GM12878 (cell line): ENCODE measurements at regions of chrX and their contacts with region 1.

Region 1: DNA sequence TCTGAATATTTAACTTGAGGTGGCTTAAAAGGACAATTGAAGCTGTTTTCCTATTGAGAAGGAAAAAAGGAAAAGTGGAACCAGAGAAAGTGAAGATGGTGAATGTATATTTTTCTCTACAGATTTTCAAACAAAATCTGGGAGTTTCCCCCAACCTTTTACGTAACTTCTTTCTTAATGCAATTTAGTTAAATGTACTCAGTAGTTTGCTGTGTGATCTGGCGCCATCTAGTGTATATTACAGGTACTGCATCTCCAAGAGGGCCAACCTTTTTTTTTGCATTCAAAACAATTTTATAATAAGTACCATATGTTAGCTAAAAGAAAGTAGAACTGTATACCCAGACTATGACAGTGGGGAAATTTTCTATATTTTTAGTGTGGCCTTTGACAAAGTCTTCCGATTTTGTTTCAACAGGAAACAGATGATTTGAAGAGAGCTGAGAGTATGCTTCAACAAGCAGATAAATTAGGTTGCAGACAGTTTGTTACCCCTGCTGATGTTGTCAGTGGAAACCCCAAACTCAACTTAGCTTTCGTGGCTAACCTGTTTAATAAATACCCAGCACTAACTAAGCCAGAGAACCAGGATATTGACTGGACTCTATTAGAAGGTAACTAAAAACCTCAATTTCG is 82.0 kb downstream of the PLS3 start:
- DNase-seq: peak; percentile 23
- ATAC-seq: peak; percentile 72
- H3K4me3 ChIP-seq: no peak overlapping the region
- H3K27ac ChIP-seq: no peak overlapping the region
- H3K4me1 ChIP-seq: no peaks in the 10 kb centered on the region
- H3K27me3 ChIP-seq: no peaks in the 10 kb centered on the region
- CTCF ChIP-seq: peak; percentile 76 to 86 (median 83)
- EP300 ChIP-seq: no peak
- POLR2A ChIP-seq: no peak
- RAD21 ChIP-seq: peak; percentile 90

Region 2: DNA sequence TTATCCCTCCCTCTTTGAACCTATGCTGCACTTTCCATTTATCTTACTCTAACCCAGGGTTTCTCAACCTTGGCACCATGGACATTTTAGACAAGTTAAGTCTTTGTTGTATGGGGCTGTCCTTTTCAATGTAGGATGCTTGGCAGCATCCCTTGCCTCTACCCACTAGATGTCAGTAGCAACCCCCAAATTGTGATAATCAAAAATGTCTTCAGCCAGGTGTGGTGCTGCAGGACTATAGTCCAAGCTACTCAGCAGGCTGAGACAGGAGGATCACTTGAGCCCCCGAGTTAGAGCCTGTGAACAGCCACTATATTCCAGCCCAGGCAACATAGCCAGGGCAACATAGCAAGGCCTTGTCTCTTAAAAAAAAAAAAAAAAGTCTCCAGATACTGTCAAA is 416.1 kb before region 1 on chrX:
- CTCF ChIA-PET with region 1: interaction called, 5 read pairs
- POLR2A ChIA-PET with region 1: no interaction called
- RAD21 ChIA-PET with region 1: no interaction called
- SMC1A ChIA-PET with region 1: interaction called, 3 read pairs
- in situ Hi-C with region 1: no loop called
- intact Hi-C with region 1: loop called (anchors 2 kb)
- DNase-seq: no peak
- ATAC-seq: peak; percentile 94
- H3K4me3 ChIP-seq: no peak overlapping the region
- H3K27ac ChIP-seq: no peak overlapping the region
- H3K4me1 ChIP-seq: no peaks in the 10 kb centered on the region
- H3K27me3 ChIP-seq: no peaks in the 10 kb centered on the region; a peak in 1 of 4 replicates
- CTCF ChIP-seq: peak; percentile 23 to 61 (median 51); a peak in 3 of 6 replicates
- EP300 ChIP-seq: no peak
- POLR2A ChIP-seq: no peak
- RAD21 ChIP-seq: peak; percentile 61; the same call in 1 of the 2 replicates

Region 3: DNA sequence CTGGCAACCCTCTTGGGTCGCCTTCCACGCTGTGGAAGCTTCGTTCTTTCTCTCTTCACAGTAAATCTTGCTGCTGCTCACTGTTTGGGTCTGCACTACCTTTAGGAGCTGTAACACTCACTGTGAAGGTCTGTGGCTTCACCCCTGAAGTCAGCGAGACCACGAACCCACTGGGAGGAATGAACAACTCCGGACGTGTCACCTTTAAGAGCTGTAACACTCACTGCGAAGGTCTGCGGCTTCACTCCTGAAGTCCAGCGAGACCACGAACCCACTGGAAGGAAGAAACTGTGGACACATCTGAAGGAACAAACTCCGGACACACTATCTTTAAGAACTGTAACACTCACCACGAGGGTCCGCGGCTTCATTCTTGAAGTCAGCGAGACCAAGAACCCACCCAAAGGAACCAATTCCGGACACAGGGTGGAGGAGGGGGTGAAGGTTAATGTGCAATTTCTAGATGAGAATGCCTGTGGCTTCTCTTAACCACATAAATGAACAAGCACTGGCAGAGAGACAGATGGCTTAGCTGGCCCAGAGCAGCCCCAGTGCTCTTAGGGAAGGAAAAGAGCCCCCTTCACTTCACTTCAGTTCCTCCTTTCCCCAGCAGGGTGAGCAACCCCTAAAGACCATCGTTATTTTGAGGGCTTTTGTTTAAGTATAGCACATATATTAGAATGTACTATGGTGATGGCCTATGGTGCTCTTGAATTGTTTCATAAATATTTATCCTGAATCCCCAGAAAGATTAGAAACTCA is 280.5 kb before region 1 on chrX:
- CTCF ChIA-PET with region 1: interaction called, 7 read pairs
- POLR2A ChIA-PET with region 1: no interaction called
- RAD21 ChIA-PET with region 1: interaction called, 3 read pairs
- SMC1A ChIA-PET with region 1: interaction called, 18 read pairs
- in situ Hi-C with region 1: no loop called
- intact Hi-C with region 1: no loop called
- DNase-seq: no peak
- ATAC-seq: peak; percentile 91
- H3K4me3 ChIP-seq: no peak overlapping the region
- H3K27ac ChIP-seq: no peak overlapping the region
- H3K4me1 ChIP-seq: no peaks in the 10 kb centered on the region
- H3K27me3 ChIP-seq: no peaks in the 10 kb centered on the region; a peak in 1 of 4 replicates
- CTCF ChIP-seq: peak in 1 of 3 experiments; percentile 13; a peak in 1 of 6 replicates
- EP300 ChIP-seq: no peak
- POLR2A ChIP-seq: no peak
- RAD21 ChIP-seq: no peak

Region 4: GRCh38 chrX:115592997-115593734 is 49.8 kb before region 1 on chrX:
- CTCF ChIA-PET with region 1: interaction called, 10 read pairs
- POLR2A ChIA-PET with region 1: no interaction called
- RAD21 ChIA-PET with region 1: interaction called, 3 read pairs
- SMC1A ChIA-PET with region 1: interaction called, 5 read pairs
- in situ Hi-C with region 1: no loop called
- intact Hi-C with region 1: no loop called
- DNase-seq: no peak
- ATAC-seq: peak; percentile 22; the same call in 2 of the 3 replicates
- H3K4me3 ChIP-seq: no peak overlapping the region
- H3K27ac ChIP-seq: no peak overlapping the region
- H3K4me1 ChIP-seq: no peaks in the 10 kb centered on the region
- H3K27me3 ChIP-seq: no peaks in the 10 kb centered on the region
- CTCF ChIP-seq: no peak
- EP300 ChIP-seq: no peak
- POLR2A ChIP-seq: no peak
- RAD21 ChIP-seq: no peak

Region 5: GRCh38 chrX:115616943-115617563 is 26.0 kb before region 1 on chrX:
- CTCF ChIA-PET with region 1: interaction called, 11 read pairs
- POLR2A ChIA-PET with region 1: no interaction called
- RAD21 ChIA-PET with region 1: interaction called, 5 read pairs
- SMC1A ChIA-PET with region 1: interaction called, 12 read pairs
- in situ Hi-C with region 1: no loop called
- intact Hi-C with region 1: no loop called
- DNase-seq: peak; percentile 58
- ATAC-seq: peak; percentile 96
- H3K4me3 ChIP-seq: no peak overlapping the region
- H3K27ac ChIP-seq: no peak overlapping the region; the same call in 1 of the 2 replicates
- H3K4me1 ChIP-seq: no peaks in the 10 kb centered on the region; the same call in 1 of the 2 replicates
- H3K27me3 ChIP-seq: no peaks in the 10 kb centered on the region; a peak in 1 of 4 replicates
- CTCF ChIP-seq: no peak
- EP300 ChIP-seq: peak in 1 of 2 experiments; percentile 50; a peak in 1 of 4 replicates
- POLR2A ChIP-seq: no peak
- RAD21 ChIP-seq: no peak

Region 6: DNA sequence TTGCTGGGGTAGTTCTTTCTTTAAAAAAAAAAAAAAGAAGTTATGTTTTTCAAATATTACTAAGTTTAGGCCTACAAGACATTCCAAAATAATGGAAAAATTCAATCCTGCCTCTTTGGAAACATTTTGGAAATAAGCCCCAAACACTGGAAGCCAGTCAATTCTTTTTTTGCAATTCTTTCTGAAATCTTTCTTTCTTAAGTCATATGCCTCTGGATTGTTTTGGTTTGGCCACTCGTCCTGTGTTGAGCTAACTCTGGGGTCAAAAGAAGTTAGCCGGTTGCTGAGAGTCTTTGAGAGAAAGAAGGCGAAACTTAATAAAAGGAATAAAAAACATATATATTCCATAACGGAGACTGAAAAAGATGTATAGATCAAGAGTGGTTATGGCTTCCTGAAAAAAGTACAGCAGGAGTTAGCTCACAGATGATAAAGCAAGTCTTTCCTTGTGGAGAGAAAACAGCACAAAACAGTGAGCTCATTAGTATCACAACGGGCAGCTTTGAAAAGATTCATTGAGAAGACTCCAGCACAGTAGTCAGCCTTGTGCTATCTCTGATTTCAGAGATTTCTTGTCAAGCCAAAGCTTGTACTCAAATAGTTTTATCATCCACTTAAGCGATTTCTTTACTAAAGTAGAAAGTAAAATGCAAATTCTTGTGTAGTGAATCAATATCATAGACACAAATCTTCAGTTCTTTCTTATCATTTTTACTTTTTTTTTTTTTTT is 17.3 kb before region 1 on chrX:
- CTCF ChIA-PET with region 1: interaction called, 19 read pairs
- POLR2A ChIA-PET with region 1: no interaction called
- RAD21 ChIA-PET with region 1: interaction called, 7 read pairs
- SMC1A ChIA-PET with region 1: interaction called, 9 read pairs
- in situ Hi-C with region 1: no loop called
- intact Hi-C with region 1: no loop called
- DNase-seq: no peak
- ATAC-seq: no peak
- H3K4me3 ChIP-seq: no peak overlapping the region
- H3K27ac ChIP-seq: no peak overlapping the region
- H3K4me1 ChIP-seq: no peaks in the 10 kb centered on the region
- H3K27me3 ChIP-seq: no peaks in the 10 kb centered on the region
- CTCF ChIP-seq: no peak
- EP300 ChIP-seq: no peak
- POLR2A ChIP-seq: no peak
- RAD21 ChIP-seq: no peak